ENCODE measurements at regions of chr5 and their contacts with region 1.

Region 1: DNA sequence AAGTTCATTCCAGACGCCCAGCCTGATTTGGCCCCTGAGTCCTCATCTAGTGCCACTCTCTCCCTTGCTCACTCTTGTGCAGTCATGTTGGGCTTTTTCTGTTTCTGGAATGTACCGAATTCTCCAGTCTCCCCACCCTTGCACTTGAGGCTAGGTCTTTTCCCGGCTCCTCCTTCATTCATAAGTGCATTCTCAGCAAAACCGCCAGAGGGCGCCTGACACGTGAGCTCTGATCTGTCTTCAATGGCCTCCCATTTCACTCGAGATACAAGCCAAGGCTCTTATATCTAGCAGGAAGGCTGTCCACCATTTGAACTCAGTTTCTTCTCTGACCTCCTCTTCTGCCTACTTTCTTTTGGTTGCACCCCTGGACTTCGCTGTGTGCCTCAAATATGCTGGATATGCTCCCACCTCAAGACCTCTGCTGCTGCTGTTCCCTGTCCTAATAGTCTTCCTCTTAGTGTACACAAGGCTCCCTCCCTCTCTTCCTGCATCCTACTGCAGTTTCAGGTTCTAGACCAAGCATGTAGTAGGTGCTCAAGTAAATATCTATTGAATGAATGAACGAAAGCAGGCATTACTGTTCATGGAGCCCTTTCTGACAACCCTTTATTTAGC is 568.1 kb upstream of the WWC1 start:
- DNase-seq: peak; percentile 67 to 90
- H3K4me3 ChIP-seq: no peak overlapping the region
- H3K27ac ChIP-seq: no peak overlapping the region
- H3K4me1 ChIP-seq: peaks cover 0 to 15% (median 8%) of the 10 kb centered on the region in 4 experiments; a peak in 2 of 7 replicates
- H3K27me3 ChIP-seq: no peaks in the 10 kb centered on the region
- CTCF ChIP-seq: peak; percentile 77 to 94 (median 89)
- EP300 ChIP-seq: no peak
- POLR2A ChIP-seq: no peak
- RAD21 ChIP-seq: peak; percentile 83 to 89

Region 2: DNA sequence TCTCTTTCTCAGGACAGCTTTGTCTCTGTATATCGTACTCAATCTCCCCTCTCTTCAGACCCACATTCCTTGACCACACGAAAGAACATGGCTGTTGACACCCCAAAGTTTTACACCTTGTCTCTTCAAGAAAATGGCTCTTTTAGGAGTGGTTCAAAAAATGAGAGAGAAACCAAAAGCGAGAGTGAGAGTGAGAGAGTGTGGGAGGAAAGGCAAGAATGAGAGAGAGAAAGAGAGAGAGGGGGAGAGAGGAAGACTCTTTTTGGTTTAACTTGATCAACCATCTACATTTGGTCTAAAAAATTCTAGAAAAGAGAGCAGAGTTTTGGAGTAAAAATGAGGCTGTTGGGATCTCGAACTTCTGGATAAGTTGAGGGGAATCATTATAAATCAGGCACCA is 13.7 kb before region 1 on chr5:
- CTCF ChIA-PET with region 1: interaction called, 24 read pairs
- POLR2A ChIA-PET with region 1: no interaction called
- DNase-seq: no peak
- H3K4me3 ChIP-seq: no peak overlapping the region
- H3K27ac ChIP-seq: no peak overlapping the region
- H3K4me1 ChIP-seq: no peaks in the 10 kb centered on the region
- H3K27me3 ChIP-seq: no peaks in the 10 kb centered on the region
- CTCF ChIP-seq: no peak
- EP300 ChIP-seq: no peak
- POLR2A ChIP-seq: no peak
- RAD21 ChIP-seq: no peak

Region 3: GRCh38 chr5:167736992-167737391 is 13.6 kb after region 1 on chr5:
- CTCF ChIA-PET with region 1: interaction called, 10 read pairs
- POLR2A ChIA-PET with region 1: interaction called, 5 read pairs
- DNase-seq: no peak
- H3K4me3 ChIP-seq: no peak overlapping the region
- H3K27ac ChIP-seq: no peak overlapping the region; the same call in 1 of the 2 replicates
- H3K4me1 ChIP-seq: no peaks in the 10 kb centered on the region; a peak in 1 of 7 replicates
- H3K27me3 ChIP-seq: no peaks in the 10 kb centered on the region
- CTCF ChIP-seq: no peak
- EP300 ChIP-seq: no peak
- POLR2A ChIP-seq: no peak
- RAD21 ChIP-seq: no peak

Region 4: GRCh38 chr5:167819406-167819805 is 96.0 kb after region 1 on chr5:
- CTCF ChIA-PET with region 1: no interaction called
- POLR2A ChIA-PET with region 1: no interaction called
- DNase-seq: no peak
- H3K4me3 ChIP-seq: no peak overlapping the region
- H3K27ac ChIP-seq: no peak overlapping the region
- H3K4me1 ChIP-seq: no peaks in the 10 kb centered on the region
- H3K27me3 ChIP-seq: no peaks in the 10 kb centered on the region
- CTCF ChIP-seq: no peak
- EP300 ChIP-seq: no peak
- POLR2A ChIP-seq: no peak
- RAD21 ChIP-seq: no peak

Measured in H1 (cell line).